Activated naive CD4-positive, alpha-beta T cell treated with anti-CD3 and anti-CD28 coated beads, Interleukin-2, amount 10 ng/mL, durations not matched to agents 7 days and 5 days (primary cell): ENCODE measurements at regions of chr20 and their contacts with region 1.

Region 1: GRCh38 chr20:39268981-39269461 is 306.9 kb downstream of the DHX35 start:
- DNase-seq: peak; percentile 48
- H3K4me3 Mint-ChIP-seq: no peak overlapping the region
- H3K27ac Mint-ChIP-seq: no peak overlapping the region
- H3K4me1 Mint-ChIP-seq: no peaks in the 10 kb centered on the region
- H3K27me3 Mint-ChIP-seq: no peaks in the 10 kb centered on the region

Region 2: GRCh38 chr20:39310363-39310995 is 41.5 kb after region 1 on chr20:
- CTCF ChIA-PET with region 1: no interaction called
- DNase-seq: no peak
- H3K4me3 Mint-ChIP-seq: no peak overlapping the region
- H3K27ac Mint-ChIP-seq: no peak overlapping the region
- H3K4me1 Mint-ChIP-seq: no peaks in the 10 kb centered on the region
- H3K27me3 Mint-ChIP-seq: peaks cover 8% of the 10 kb centered on the region

Region 3: GRCh38 chr20:39874049-39874888 is 605.2 kb after region 1 on chr20:
- CTCF ChIA-PET with region 1: interaction called, 12 read pairs
- DNase-seq: peak; percentile 35
- H3K4me3 Mint-ChIP-seq: no peak overlapping the region
- H3K27ac Mint-ChIP-seq: no peak overlapping the region
- H3K4me1 Mint-ChIP-seq: no peaks in the 10 kb centered on the region
- H3K27me3 Mint-ChIP-seq: no peaks in the 10 kb centered on the region